Naive thymus-derived CD4-positive, alpha-beta T cell (primary cell): ENCODE measurements at regions of chr4 and their contacts with region 1.

Region 1: DNA sequence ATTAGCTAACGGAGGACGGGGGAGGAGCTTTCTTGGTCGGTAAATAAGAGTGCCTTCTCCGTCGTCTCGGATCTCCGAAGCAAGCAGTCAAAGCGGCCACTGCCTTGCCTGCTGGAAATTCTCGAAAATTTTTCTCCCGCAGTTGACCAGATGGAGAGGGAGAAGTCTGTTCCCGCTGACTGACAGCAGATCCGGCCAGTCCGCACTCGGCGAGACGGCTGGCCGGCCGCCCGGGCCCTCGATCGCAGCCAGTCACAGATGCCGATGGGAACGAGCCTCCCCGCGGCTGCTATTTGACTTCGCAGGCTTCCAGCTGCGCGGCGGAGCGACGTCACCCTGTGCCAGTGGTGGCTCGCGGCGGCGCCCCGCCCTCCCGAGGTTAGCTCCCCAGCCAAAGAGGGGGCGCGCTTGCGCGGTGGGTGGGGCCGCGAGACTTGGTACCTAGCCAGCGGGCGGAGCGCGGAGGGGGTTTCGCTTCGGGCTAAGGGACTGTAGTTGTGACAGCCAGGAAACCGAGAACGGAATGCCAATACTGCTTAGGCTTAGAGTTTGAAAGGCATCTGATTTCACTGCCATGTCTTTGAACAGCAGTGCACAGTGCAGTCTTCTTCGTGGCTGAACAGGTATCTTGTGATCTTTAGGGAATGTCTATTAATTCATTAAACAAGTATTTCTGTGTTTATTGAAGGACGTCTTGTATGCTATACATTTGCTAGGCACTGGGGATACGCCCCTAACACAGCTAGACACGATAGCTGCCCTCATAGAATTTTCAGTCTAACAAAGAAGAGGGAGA is at the start of gene PPM1K:
- DNase-seq: peak; percentile 98 to 100 (median 99)
- ATAC-seq: peak; percentile 92
- H3K4me3 ChIP-seq: peak within 1 kb of the TSS; percentile 87
- H3K4me3 Mint-ChIP-seq: peak within 1 kb of the TSS; percentile 90 to 99 (median 97)
- H3K27ac ChIP-seq: peak within 1 kb of the TSS; percentile 96
- H3K27ac Mint-ChIP-seq: peak within 1 kb of the TSS; percentile 92 to 100 (median 99)
- H3K4me1 ChIP-seq: peaks cover 21 to 30% of the 10 kb centered on the region in 2 donors
- H3K4me1 Mint-ChIP-seq: peaks cover 32 to 52% (median 47%) of the 10 kb centered on the region in 7 donors
- H3K27me3 ChIP-seq: no peaks in the 10 kb centered on the region
- H3K27me3 Mint-ChIP-seq: no peaks in the 10 kb centered on the region
- total RNA-seq, gene PPM1K: 72.1 to 92.7 (median 91.9) TPM

Region 2: DNA sequence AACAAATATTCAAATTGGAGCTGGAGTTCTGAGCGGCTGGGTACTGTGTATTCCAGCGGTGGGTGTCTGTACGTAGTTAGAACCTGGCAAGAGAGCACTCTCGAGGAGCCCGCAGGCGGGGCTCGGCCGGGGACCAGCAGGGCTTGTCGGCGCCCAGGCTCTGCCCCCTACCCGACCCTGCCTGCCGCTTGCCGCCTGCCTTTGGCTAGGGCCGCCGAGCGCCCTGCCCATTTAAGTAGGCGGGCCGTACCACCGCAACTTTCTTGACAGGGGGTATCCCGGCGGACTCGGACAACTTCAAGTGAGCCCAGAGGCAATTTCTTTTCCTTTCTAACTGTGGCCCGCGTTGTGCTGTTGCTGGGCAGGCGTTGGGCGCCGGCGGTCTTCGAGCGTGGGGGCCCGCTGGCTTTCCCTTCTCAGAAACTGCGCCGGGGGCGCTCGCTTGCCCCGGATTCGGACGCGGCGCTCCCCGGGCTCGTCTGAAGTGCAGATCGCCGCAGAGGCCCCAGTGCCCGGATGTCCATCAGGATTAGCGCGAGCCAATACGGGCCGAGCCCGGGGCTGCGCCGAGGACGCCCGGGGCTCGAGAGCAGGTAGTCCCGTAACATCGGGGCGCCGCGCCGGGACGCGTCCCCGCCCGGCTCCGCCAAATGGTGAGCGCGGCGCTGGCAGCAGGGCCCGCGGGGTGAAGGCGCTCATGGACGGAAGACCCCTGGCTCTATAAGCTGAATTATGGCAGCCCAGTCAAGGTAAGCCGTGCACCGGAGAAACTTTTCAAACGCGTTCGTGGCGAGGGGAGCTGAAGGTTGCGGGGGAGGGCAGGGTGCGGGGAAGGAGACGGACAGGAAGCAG is 1277.7 kb before region 1 on chr4:
- CTCF ChIA-PET with region 1: no interaction called
- POLR2A ChIA-PET with region 1: interaction called, 3 read pairs
- intact Hi-C with region 1: loop called (anchors 2 kb)
- DNase-seq: peak; percentile 85 to 92 (median 89)
- ATAC-seq: peak; percentile 88
- H3K4me3 ChIP-seq: peak overlapping the region; percentile 85
- H3K4me3 Mint-ChIP-seq: peak overlapping the region; percentile 87 to 100 (median 93)
- H3K27ac ChIP-seq: peak overlapping the region; percentile 91
- H3K27ac Mint-ChIP-seq: peak overlapping the region; percentile 95 to 99 (median 98)
- H3K4me1 ChIP-seq: peaks cover 25 to 28% of the 10 kb centered on the region in 2 donors
- H3K4me1 Mint-ChIP-seq: peaks cover 39 to 72% (median 59%) of the 10 kb centered on the region in 7 donors
- H3K27me3 ChIP-seq: no peaks in the 10 kb centered on the region
- H3K27me3 Mint-ChIP-seq: no peaks in the 10 kb centered on the region

Region 3: DNA sequence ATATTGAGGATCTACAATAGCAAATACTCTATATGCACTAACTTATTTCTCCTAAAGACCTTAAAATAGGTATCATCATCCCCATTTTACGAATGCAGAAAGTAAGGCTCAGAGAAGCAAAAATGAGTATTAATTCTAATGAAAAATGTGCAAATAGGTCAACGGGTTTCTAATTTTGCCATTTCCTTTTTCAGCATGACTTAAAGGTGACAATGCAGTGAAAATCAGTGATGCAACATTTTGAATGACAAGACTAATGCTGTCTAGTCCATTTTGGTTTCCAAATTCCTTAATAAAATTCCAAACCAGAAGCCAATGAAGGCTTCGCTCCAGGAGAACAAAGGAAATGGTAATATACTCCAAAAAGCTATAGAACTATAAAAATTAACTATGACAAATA is 522.3 kb before region 1 on chr4:
- CTCF ChIA-PET with region 1: no interaction called
- POLR2A ChIA-PET with region 1: no interaction called
- intact Hi-C with region 1: no loop called
- DNase-seq: no peak
- ATAC-seq: no peak
- H3K4me3 ChIP-seq: no peak overlapping the region
- H3K4me3 Mint-ChIP-seq: no peak overlapping the region
- H3K27ac ChIP-seq: no peak overlapping the region
- H3K27ac Mint-ChIP-seq: no peak overlapping the region
- H3K4me1 ChIP-seq: no peaks in the 10 kb centered on the region
- H3K4me1 Mint-ChIP-seq: peaks cover 0 to 1% (median 0%) of the 10 kb centered on the region in 7 donors
- H3K27me3 ChIP-seq: no peaks in the 10 kb centered on the region
- H3K27me3 Mint-ChIP-seq: peaks cover 0 to 19% (median 1%) of the 10 kb centered on the region in 5 donors

Region 4: GRCh38 chr4:88007304-88008121 is 277.1 kb before region 1 on chr4 and contains the start of gene PKD2:
- CTCF ChIA-PET with region 1: no interaction called
- POLR2A ChIA-PET with region 1: no interaction called
- intact Hi-C with region 1: loop called in 1 of 2 experiments (anchors 1 kb)
- DNase-seq: peak; percentile 10 to 89 (median 54)
- ATAC-seq: peak; percentile 92
- H3K4me3 ChIP-seq: peak within 1 kb of the TSS; percentile 61
- H3K4me3 Mint-ChIP-seq: peak within 1 kb of the TSS; percentile 81 to 98 (median 94)
- H3K27ac ChIP-seq: peak within 1 kb of the TSS; percentile 56
- H3K27ac Mint-ChIP-seq: peak within 1 kb of the TSS; percentile 2 to 90 (median 58)
- H3K4me1 ChIP-seq: peaks cover 6 to 7% of the 10 kb centered on the region in 2 donors
- H3K4me1 Mint-ChIP-seq: peaks cover 19 to 42% (median 37%) of the 10 kb centered on the region in 7 donors
- H3K27me3 ChIP-seq: no peaks in the 10 kb centered on the region
- H3K27me3 Mint-ChIP-seq: peaks cover 0 to 31% (median 3%) of the 10 kb centered on the region in 5 donors
- total RNA-seq, gene PKD2: 4.9 to 16.1 (median 6.8) TPM

Region 5: GRCh38 chr4:88320780-88321373 is 36.2 kb after region 1 on chr4:
- CTCF ChIA-PET with region 1: interaction called, 4 read pairs
- POLR2A ChIA-PET with region 1: interaction called, 49 read pairs
- intact Hi-C with region 1: loop called (anchors 1 kb)
- DNase-seq: peak in 7 of 9 donors; percentile 9 to 39 (median 25)
- ATAC-seq: peak; percentile 91
- H3K4me3 ChIP-seq: peak overlapping the region; percentile 18
- H3K4me3 Mint-ChIP-seq: peak overlapping the region; percentile 69 to 90 (median 82)
- H3K27ac ChIP-seq: peak overlapping the region; percentile 63
- H3K27ac Mint-ChIP-seq: peak overlapping the region; percentile 88 to 98 (median 93)
- H3K4me1 ChIP-seq: peaks cover 7 to 13% of the 10 kb centered on the region in 2 donors
- H3K4me1 Mint-ChIP-seq: peaks cover 14 to 30% (median 23%) of the 10 kb centered on the region in 7 donors
- H3K27me3 ChIP-seq: no peaks in the 10 kb centered on the region
- H3K27me3 Mint-ChIP-seq: no peaks in the 10 kb centered on the region

Region 6: GRCh38 chr4:88514557-88515511 is 230.2 kb after region 1 on chr4:
- CTCF ChIA-PET with region 1: no interaction called
- POLR2A ChIA-PET with region 1: no interaction called
- intact Hi-C with region 1: loop called (anchors 1 kb)
- DNase-seq: no peak
- ATAC-seq: no peak
- H3K4me3 ChIP-seq: no peak overlapping the region
- H3K4me3 Mint-ChIP-seq: no peak overlapping the region
- H3K27ac ChIP-seq: no peak overlapping the region
- H3K27ac Mint-ChIP-seq: no peak overlapping the region
- H3K4me1 ChIP-seq: no peaks in the 10 kb centered on the region
- H3K4me1 Mint-ChIP-seq: no peaks in the 10 kb centered on the region
- H3K27me3 ChIP-seq: no peaks in the 10 kb centered on the region
- H3K27me3 Mint-ChIP-seq: peaks cover 0 to 8% (median 0%) of the 10 kb centered on the region in 5 donors

Region 7: DNA sequence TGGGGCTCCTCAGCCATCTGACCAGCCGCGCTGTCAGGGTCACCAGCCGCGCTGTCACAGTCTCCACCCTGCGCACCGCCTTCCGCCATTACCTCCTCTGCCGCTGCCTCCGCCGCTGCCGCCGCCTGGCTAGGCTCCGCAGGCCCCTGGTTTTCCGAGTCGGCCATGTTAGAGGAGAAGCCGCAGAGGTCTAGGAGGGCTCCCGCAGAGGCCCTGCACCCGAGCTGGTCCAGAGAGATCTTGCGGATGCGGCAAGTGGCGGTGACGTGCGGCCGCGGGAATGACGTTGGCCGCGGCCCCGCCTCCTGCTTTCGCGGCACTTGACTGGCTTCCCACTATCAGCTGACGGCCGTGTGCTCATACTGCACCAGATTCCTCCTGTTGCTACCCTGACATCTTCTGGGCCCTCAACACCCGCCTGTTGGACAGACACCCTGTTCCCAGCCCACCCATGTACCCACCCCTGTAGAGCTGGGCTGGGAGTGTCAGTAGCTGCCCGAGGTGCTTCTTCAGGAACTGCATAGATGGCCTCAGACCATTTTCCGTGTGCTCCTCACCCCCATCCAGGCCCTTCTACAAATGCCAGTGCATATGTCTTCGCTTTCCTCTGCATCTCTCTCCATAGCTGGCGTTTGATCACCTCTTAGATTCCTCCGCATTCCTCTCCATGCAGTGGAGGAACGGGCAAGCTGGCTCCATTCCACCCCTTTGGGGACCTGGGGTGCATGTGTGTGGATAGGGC is 413.1 kb after region 1 on chr4 and contains the start of gene NAP1L5:
- CTCF ChIA-PET with region 1: no interaction called
- POLR2A ChIA-PET with region 1: no interaction called
- intact Hi-C with region 1: loop called in 1 of 2 experiments (anchors 2 kb)
- DNase-seq: peak; percentile 57 to 88 (median 81)
- ATAC-seq: peak; percentile 95
- H3K4me3 ChIP-seq: peak within 1 kb of the TSS; percentile 68
- H3K4me3 Mint-ChIP-seq: peak within 1 kb of the TSS; percentile 82 to 92 (median 88)
- H3K27ac ChIP-seq: peak within 1 kb of the TSS; percentile 79
- H3K27ac Mint-ChIP-seq: peak within 1 kb of the TSS; percentile 79 to 96 (median 94)
- H3K4me1 ChIP-seq: peaks cover 0 to 13% of the 10 kb centered on the region in 2 donors
- H3K4me1 Mint-ChIP-seq: peaks cover 5 to 35% (median 22%) of the 10 kb centered on the region in 7 donors
- H3K27me3 ChIP-seq: no peaks in the 10 kb centered on the region
- H3K27me3 Mint-ChIP-seq: no peaks in the 10 kb centered on the region
- total RNA-seq, gene NAP1L5: 1.4 to 11.7 (median 4.5) TPM

Region 8: DNA sequence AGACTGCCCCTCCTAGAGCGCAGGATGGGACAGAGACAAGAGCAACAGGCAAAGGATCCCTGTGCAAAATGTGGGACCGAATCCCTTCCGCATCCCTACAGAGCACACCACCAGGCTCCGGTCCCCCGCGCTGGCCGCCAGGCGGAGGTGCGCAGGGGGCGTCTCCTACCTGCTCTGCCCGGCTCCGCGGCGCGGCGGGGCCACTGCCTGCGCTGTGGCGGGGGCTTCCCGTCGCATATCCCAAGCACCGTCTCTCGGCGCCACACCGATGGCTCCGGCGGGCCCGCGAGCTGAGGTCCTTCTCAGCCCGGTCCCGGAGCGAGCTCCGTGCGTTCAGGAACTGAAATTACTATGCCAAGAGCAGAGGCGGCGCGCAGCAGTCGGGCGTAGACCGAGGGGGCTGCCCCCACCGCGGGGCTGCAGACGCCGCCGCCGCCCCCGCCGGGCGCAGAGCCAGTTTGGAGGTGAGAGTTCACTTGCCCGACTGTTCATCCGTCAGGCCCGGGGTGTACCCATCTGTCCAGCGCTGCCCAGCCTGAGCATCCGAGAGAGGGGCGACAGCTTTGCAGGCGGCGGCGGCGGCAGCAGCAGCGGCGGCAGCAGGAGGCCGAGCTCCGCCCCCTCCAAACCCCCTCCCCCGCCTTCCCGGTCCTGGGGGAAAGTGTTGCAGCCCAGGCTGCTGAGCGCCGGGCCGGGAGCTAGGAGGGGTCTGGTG is 1023.0 kb after region 1 on chr4 and contains the start of gene GPRIN3:
- CTCF ChIA-PET with region 1: no interaction called
- POLR2A ChIA-PET with region 1: no interaction called
- intact Hi-C with region 1: loop called in 1 of 2 experiments (anchors 10 kb)
- DNase-seq: peak; percentile 54 to 80 (median 66)
- ATAC-seq: peak; percentile 79
- H3K4me3 ChIP-seq: peak within 1 kb of the TSS; percentile 93
- H3K4me3 Mint-ChIP-seq: peak within 1 kb of the TSS; percentile 80 to 99 (median 94)
- H3K27ac ChIP-seq: peak within 1 kb of the TSS; percentile 81
- H3K27ac Mint-ChIP-seq: peak within 1 kb of the TSS; percentile 83 to 98 (median 90)
- H3K4me1 ChIP-seq: peaks cover 18 to 20% of the 10 kb centered on the region in 2 donors
- H3K4me1 Mint-ChIP-seq: peaks cover 39 to 70% (median 64%) of the 10 kb centered on the region in 7 donors
- H3K27me3 ChIP-seq: no peaks in the 10 kb centered on the region
- H3K27me3 Mint-ChIP-seq: no peaks in the 10 kb centered on the region
- total RNA-seq, gene GPRIN3: 10.2 to 55.5 (median 24.8) TPM